CD4-positive, alpha-beta T cell (primary cell): ENCODE measurements at regions of chr15 and their contacts with region 1.

Region 1: DNA sequence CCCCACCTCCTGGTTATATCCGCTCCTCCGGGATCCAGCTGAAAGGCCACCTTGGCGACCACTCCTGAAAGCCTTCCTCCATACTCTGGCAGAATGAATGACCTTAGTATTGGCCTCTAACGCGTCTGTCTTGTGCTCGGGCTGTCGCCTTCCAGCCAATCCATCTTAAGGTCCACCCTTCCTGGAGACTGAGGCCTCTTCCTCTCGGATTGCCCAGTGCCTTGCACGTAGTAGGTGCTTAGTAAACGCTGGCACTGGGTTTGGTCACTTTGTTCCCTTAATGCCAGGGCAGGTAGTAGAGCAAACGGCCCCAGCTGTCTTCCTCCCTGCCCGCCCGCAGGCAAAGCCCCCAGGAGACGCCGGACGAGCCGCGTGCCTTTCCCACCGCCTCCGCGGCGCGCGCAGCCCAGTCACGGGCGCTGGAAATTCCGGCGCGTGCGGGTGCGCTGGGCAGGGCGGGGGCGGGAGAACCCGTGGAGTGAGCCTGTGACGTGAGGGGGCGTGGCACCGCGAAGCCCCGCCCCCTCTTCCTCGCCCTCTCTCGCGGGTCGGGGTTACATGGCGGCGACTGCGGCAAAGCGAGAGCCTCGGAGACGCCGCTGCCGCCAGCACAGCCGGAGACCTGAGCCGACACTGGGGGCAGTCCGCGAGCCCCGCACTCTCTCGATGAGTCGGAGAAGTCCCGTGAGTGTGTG is at the start of gene MAPK6:
- DNase-seq: peak; percentile 87 to 99 (median 92)
- ATAC-seq: peak; percentile 88
- H3K4me3 ChIP-seq: peak within 1 kb of the TSS; percentile 71
- H3K4me3 Mint-ChIP-seq: peak within 1 kb of the TSS; percentile 99
- H3K27ac ChIP-seq: peak within 1 kb of the TSS; percentile 79 to 87
- H3K27ac Mint-ChIP-seq: peak within 1 kb of the TSS; percentile 97
- H3K4me1 ChIP-seq: peaks cover 18% of the 10 kb centered on the region
- H3K4me1 Mint-ChIP-seq: peaks cover 34% of the 10 kb centered on the region
- H3K27me3 ChIP-seq: no peaks in the 10 kb centered on the region
- H3K27me3 Mint-ChIP-seq: no peaks in the 10 kb centered on the region
- CTCF ChIP-seq: no peak
- total RNA-seq, gene MAPK6: 48.5 to 49.8 TPM

Region 2: GRCh38 chr15:51829360-51830275 is 189.2 kb before region 1 on chr15 and contains the start of gene TMOD3:
- CTCF ChIA-PET with region 1: no interaction called
- POLR2A ChIA-PET with region 1: no interaction called
- intact Hi-C with region 1: loop called in 1 of 2 experiments (anchors 5 kb)
- DNase-seq: peak; percentile 83 to 93 (median 86)
- ATAC-seq: peak; percentile 82
- H3K4me3 ChIP-seq: peak within 1 kb of the TSS; percentile 82
- H3K4me3 Mint-ChIP-seq: peak within 1 kb of the TSS; percentile 100
- H3K27ac ChIP-seq: peak within 1 kb of the TSS; percentile 63 to 85
- H3K27ac Mint-ChIP-seq: peak within 1 kb of the TSS; percentile 91
- H3K4me1 ChIP-seq: peaks cover 15% of the 10 kb centered on the region
- H3K4me1 Mint-ChIP-seq: peaks cover 52% of the 10 kb centered on the region
- H3K27me3 ChIP-seq: no peaks in the 10 kb centered on the region
- H3K27me3 Mint-ChIP-seq: no peaks in the 10 kb centered on the region
- CTCF ChIP-seq: no peak
- total RNA-seq, gene TMOD3: 37.6 to 39.0 TPM

Region 3: GRCh38 chr15:51924156-51925068 is 94.4 kb before region 1 on chr15:
- CTCF ChIA-PET with region 1: no interaction called
- POLR2A ChIA-PET with region 1: no interaction called
- intact Hi-C with region 1: no loop called
- DNase-seq: no peak
- ATAC-seq: no peak
- H3K4me3 ChIP-seq: no peak overlapping the region
- H3K4me3 Mint-ChIP-seq: no peak overlapping the region
- H3K27ac ChIP-seq: no peak overlapping the region
- H3K27ac Mint-ChIP-seq: no peak overlapping the region
- H3K4me1 ChIP-seq: no peaks in the 10 kb centered on the region
- H3K4me1 Mint-ChIP-seq: no peaks in the 10 kb centered on the region
- H3K27me3 ChIP-seq: no peaks in the 10 kb centered on the region
- H3K27me3 Mint-ChIP-seq: no peaks in the 10 kb centered on the region
- CTCF ChIP-seq: no peak

Region 4: DNA sequence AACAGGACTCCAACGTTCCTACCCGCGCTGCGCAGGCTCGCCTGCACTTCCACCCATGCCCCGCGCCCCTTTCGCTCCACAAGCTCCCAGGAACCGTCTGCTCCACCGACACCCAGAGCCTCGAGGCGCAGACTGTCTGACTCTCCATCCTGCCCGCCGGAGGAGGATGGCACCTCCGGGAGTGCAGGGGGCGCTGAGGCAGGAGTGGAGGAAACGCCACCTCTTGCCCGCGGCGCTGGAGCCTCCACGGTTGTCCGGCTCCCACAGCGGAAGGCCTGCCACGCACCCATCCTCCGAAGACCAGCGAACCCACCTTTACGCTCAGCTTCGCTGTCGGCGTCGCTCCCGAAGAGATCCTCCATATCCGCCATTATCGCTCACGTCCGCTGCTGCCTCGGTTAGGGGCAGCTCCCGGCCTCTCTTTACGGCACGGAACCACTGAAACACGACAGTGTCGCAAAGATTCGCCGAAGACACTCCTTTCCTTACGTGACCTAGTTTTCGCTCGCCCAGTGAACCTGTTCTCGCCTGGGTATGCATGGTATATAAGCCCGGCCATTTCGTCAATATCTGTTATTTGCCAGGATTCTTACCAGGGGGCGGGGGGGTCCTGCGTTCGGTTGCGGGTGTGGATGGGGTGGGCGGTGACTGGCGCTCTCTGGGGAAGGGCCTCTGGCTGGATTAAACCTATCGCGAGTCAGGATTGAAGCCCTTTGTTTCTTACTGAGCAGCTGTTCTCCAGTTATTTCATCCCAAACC is 47.3 kb before region 1 on chr15 and contains the start of gene LEO1:
- CTCF ChIA-PET with region 1: interaction called, 5 read pairs
- POLR2A ChIA-PET with region 1: interaction called, 14 read pairs
- intact Hi-C with region 1: loop called in 1 of 2 experiments (anchors 2 kb)
- DNase-seq: peak; percentile 73 to 97 (median 83)
- ATAC-seq: peak; percentile 92
- H3K4me3 ChIP-seq: peak within 1 kb of the TSS; percentile 98
- H3K4me3 Mint-ChIP-seq: peak within 1 kb of the TSS; percentile 95
- H3K27ac ChIP-seq: peak within 1 kb of the TSS; percentile 79 to 85
- H3K27ac Mint-ChIP-seq: peak within 1 kb of the TSS; percentile 92
- H3K4me1 ChIP-seq: peaks cover 19% of the 10 kb centered on the region
- H3K4me1 Mint-ChIP-seq: peaks cover 28% of the 10 kb centered on the region
- H3K27me3 ChIP-seq: no peaks in the 10 kb centered on the region
- H3K27me3 Mint-ChIP-seq: no peaks in the 10 kb centered on the region
- CTCF ChIP-seq: peak; percentile 47
- total RNA-seq, gene LEO1: 6.2 to 6.7 TPM

Region 5: DNA sequence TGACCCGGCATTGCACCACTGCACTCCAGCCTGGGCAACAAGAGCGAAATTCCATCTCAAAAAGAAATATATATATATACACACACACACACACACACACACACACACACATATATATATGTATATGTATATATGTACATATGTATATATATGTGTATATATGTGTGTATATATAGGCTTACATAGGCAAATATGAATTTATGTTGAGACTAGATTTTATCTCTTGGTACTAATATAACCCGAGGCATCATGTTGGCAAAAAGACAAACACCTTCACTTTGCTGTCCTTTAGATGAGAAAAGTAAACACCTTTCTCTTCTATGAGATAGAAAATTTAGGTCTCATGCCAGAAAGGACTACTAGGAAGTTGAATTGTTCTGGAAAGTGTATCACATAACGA is 27.8 kb before region 1 on chr15:
- CTCF ChIA-PET with region 1: no interaction called
- POLR2A ChIA-PET with region 1: no interaction called
- intact Hi-C with region 1: no loop called
- DNase-seq: no peak
- ATAC-seq: no peak
- H3K4me3 ChIP-seq: no peak overlapping the region
- H3K4me3 Mint-ChIP-seq: no peak overlapping the region
- H3K27ac ChIP-seq: no peak overlapping the region
- H3K27ac Mint-ChIP-seq: no peak overlapping the region
- H3K4me1 ChIP-seq: no peaks in the 10 kb centered on the region
- H3K4me1 Mint-ChIP-seq: no peaks in the 10 kb centered on the region
- H3K27me3 ChIP-seq: no peaks in the 10 kb centered on the region
- H3K27me3 Mint-ChIP-seq: no peaks in the 10 kb centered on the region
- CTCF ChIP-seq: no peak

Region 6: DNA sequence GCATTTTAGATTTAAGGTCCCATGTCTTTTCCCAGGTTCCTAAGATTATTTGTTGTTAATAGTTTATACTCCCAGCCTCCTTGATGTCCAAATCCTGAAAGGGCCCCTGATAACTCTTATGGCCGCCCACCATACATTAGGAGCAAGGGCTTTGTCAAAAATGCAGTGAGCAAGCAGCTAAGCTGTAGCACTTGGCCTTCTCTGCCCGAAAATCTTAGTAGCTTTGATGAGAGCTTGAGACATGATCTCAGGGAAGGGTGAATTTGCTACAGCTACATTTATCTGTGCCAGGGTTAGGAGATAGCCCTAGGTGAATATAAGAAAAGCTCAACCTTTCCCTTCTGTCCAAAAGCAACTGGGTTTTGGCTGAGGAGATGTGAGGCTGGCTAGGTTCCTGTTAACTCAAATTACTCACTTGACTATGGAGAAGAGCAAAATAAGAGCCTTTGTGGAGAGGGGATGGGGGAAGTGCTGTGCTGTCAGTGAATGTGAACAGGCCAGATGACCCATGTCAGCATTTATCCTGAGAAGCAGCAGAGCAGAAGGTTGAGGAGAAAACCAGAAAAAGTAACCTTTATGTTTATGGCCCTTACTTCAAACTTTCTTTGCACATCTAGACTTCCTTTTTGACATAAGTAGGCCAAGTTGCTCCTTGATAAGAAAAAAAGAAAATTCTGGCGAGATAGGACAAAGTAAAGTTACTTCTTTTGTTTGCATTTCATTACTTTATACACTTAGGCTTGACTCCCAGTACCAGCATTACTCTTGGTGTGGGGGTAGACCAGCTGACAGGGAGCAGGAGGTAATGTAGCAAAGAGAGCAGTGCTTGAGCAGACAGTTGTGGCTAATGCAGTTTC is 21.3 kb after region 1 on chr15:
- CTCF ChIA-PET with region 1: interaction called, 7 read pairs
- POLR2A ChIA-PET with region 1: interaction called, 49 read pairs
- intact Hi-C with region 1: loop called (anchors 1 to 2 kb)
- DNase-seq: no peak
- ATAC-seq: no peak
- H3K4me3 ChIP-seq: no peak overlapping the region
- H3K4me3 Mint-ChIP-seq: peak overlapping the region; percentile 16
- H3K27ac ChIP-seq: peak overlapping the region in 1 of 2 donors; percentile 19
- H3K27ac Mint-ChIP-seq: peak overlapping the region; percentile 40
- H3K4me1 ChIP-seq: peaks cover 10% of the 10 kb centered on the region
- H3K4me1 Mint-ChIP-seq: peaks cover 69% of the 10 kb centered on the region
- H3K27me3 ChIP-seq: no peaks in the 10 kb centered on the region
- H3K27me3 Mint-ChIP-seq: no peaks in the 10 kb centered on the region
- CTCF ChIP-seq: no peak

Region 7: DNA sequence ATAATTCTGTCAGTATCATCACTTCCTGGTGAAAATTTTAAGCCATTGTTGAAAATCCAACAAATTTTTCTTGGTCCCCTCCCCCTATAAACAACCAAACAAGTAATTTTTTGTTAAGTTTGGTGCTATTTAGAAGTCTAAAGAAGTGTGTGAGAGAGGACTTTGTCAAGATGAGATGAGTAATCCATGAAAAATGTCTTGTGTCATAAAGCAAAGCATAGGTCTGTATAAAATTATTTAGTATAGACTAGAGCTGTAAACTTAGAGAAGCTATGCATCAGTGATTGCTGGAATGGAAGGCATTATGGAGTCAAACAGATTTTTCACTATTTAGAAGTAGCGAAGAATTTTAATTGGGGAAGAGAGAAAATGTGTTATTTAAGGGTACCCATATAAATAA is 31.6 kb after region 1 on chr15:
- CTCF ChIA-PET with region 1: interaction called, 7 read pairs
- POLR2A ChIA-PET with region 1: interaction called, 49 read pairs
- intact Hi-C with region 1: loop called (anchors 1 to 2 kb)
- DNase-seq: no peak
- ATAC-seq: no peak
- H3K4me3 ChIP-seq: no peak overlapping the region
- H3K4me3 Mint-ChIP-seq: no peak overlapping the region
- H3K27ac ChIP-seq: no peak overlapping the region
- H3K27ac Mint-ChIP-seq: no peak overlapping the region
- H3K4me1 ChIP-seq: peaks cover 6% of the 10 kb centered on the region
- H3K4me1 Mint-ChIP-seq: peaks cover 31% of the 10 kb centered on the region
- H3K27me3 ChIP-seq: no peaks in the 10 kb centered on the region
- H3K27me3 Mint-ChIP-seq: no peaks in the 10 kb centered on the region
- CTCF ChIP-seq: no peak

Region 8: GRCh38 chr15:52078876-52079700 is 60.2 kb after region 1 on chr15:
- CTCF ChIA-PET with region 1: interaction called, 5 read pairs
- POLR2A ChIA-PET with region 1: interaction called, 9 read pairs
- intact Hi-C with region 1: loop called in 1 of 2 experiments (anchors 1 kb)
- DNase-seq: peak; percentile 75 to 93 (median 82)
- ATAC-seq: peak; percentile 91
- H3K4me3 ChIP-seq: no peak overlapping the region
- H3K4me3 Mint-ChIP-seq: no peak overlapping the region
- H3K27ac ChIP-seq: no peak overlapping the region
- H3K27ac Mint-ChIP-seq: no peak overlapping the region
- H3K4me1 ChIP-seq: peaks cover 11% of the 10 kb centered on the region
- H3K4me1 Mint-ChIP-seq: peaks cover 12% of the 10 kb centered on the region
- H3K27me3 ChIP-seq: no peaks in the 10 kb centered on the region
- H3K27me3 Mint-ChIP-seq: no peaks in the 10 kb centered on the region
- CTCF ChIP-seq: peak; percentile 83

Region 9: DNA sequence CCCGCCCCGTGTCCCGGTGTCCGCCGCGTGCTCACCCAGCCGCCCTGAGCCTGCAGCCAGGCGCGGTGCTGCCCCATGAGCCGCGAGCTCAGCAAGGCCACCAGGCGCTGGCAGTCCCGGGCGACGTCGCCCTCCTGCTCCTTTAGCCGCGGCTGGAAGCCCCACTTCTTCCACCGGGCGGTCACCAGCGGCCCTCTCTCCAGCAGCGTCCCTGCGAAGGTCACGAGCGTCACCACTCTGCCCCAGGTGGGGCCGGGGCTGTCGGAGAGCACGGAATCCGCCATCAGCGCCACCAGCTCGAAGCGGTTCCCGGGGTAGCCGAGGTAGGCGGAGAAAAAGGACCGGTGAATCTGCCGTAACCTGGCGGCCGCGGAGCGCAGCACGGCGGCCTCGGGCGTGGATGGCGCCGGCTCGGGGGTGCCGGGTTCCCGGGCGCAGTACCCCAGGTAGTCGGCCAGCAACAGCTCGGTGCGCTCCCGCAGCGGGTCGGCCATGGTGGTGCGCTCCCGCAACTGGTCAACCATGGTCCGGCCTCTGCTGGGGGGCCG is 93.4 kb after region 1 on chr15:
- CTCF ChIA-PET with region 1: no interaction called
- POLR2A ChIA-PET with region 1: no interaction called
- intact Hi-C with region 1: no loop called
- DNase-seq: peak; percentile 9 to 70 (median 32)
- ATAC-seq: peak; percentile 89
- H3K4me3 ChIP-seq: peak overlapping the region; percentile 55
- H3K4me3 Mint-ChIP-seq: peak overlapping the region; percentile 73
- H3K27ac ChIP-seq: no peak overlapping the region
- H3K27ac Mint-ChIP-seq: no peak overlapping the region
- H3K4me1 ChIP-seq: peaks cover 19% of the 10 kb centered on the region
- H3K4me1 Mint-ChIP-seq: peaks cover 16% of the 10 kb centered on the region
- H3K27me3 ChIP-seq: peaks cover 9 to 13% of the 10 kb centered on the region in 2 experiments
- H3K27me3 Mint-ChIP-seq: peaks cover 29% of the 10 kb centered on the region
- CTCF ChIP-seq: peak; percentile 21